PC-9 (cell line): ENCODE measurements at regions of chr2 and their contacts with region 1.

Region 1: GRCh38 chr2:219530048-219530963 is 13.3 kb downstream of the CHPF start:
- DNase-seq: peak; percentile 54 to 84
- H3K4me3 ChIP-seq: no peak overlapping the region
- H3K27ac ChIP-seq: no peak overlapping the region
- H3K4me1 ChIP-seq: no peaks in the 10 kb centered on the region
- H3K27me3 ChIP-seq: peaks cover 33% of the 10 kb centered on the region
- CTCF ChIP-seq: peak; percentile 95

Region 2: GRCh38 chr2:219057709-219058540 is 472.4 kb before region 1 on chr2:
- CTCF ChIA-PET with region 1: no interaction called
- POLR2A ChIA-PET with region 1: no interaction called
- intact Hi-C with region 1: loop called (anchors 2 kb)
- DNase-seq: peak in 1 of 2 experiments; percentile 69
- H3K4me3 ChIP-seq: no peak overlapping the region
- H3K27ac ChIP-seq: no peak overlapping the region
- H3K4me1 ChIP-seq: no peaks in the 10 kb centered on the region
- H3K27me3 ChIP-seq: peaks cover 70% of the 10 kb centered on the region
- CTCF ChIP-seq: peak; percentile 80

Region 3: DNA sequence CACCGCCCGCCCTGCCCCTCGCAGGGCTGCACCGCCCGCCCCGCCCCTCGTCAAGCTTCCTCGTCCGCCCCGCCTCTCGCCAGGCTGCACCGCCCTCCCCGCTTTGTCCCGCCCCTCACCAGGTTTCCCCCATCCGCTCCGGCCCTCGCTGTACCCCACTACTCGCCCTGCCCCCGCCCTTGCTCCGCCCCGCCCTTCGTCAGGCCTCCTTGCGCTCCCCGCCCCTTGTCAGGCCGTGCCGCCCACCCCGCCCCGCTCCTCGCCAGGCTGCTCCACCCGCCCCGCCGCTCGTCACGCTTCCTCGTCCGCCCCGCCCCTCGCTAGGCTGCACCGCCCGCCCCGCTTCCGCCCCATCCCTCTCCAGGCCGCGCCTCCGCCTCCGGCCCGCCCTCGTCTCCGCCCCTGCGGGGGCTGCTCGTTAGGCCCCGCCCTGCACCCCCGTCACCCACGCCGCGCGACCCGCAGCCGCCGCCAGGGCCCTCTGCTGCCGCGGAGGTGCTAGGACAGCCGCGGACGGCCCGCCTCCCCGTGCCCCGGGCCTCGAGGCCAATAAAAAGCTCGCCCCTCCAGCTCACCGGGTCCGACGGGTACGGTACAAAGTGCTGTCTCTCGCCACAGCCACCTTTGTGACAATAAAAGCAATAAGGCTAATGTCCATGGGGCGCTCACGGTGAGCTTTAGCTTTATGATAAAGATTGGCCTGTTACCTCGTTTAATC is 142.0 kb before region 1 on chr2:
- CTCF ChIA-PET with region 1: interaction called, 7 read pairs
- POLR2A ChIA-PET with region 1: interaction called, 10 read pairs
- intact Hi-C with region 1: loop called (anchors 1 kb)
- DNase-seq: peak; percentile 71 to 98
- H3K4me3 ChIP-seq: peak overlapping the region; percentile 53
- H3K27ac ChIP-seq: peak overlapping the region; percentile 30
- H3K4me1 ChIP-seq: peaks cover 6% of the 10 kb centered on the region; the same call in 1 of the 2 replicates
- H3K27me3 ChIP-seq: no peaks in the 10 kb centered on the region
- CTCF ChIP-seq: peak; percentile 60

Region 4: DNA sequence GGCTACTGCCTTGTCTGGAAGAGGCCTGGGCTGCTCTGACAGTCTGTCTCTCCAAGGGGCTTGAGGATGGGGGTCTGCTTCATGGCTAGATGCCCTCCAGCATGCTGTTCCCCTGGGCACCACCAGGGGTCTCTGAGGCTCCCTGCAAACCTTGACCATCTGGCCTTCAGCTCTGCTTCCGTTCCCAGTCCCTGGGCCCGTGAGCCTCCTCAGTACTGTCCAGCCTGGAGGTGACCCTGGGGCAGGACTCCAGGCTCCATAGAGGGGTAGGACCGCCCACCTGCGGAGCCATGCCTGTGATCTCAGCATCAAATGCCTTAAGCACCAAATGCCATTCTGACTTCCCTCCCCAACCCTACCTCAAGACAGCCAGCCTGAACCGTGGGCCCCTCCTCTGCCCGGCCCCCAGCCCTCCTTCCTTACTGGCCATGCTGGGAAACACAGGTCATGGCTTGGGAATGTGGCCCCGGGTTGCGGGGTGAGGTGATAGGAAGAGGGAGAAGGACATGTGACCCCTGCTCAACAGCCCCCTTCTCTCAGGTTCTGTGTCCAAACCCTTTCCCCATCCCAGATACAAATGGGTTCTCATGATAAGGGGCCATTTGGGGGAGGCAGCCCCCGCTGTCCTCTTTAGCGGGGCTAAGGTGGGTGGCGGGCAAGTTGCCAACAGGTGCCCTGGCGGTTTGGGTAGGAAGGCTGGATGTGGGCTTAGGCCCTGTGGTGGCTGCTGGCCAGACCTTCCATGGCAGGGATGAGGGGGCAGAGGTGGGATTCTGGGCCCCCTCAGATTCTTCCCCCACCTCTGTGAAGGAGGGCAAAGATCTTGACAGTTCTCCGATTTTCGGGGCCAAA is 70.6 kb before region 1 on chr2:
- CTCF ChIA-PET with region 1: interaction called, 13 read pairs
- POLR2A ChIA-PET with region 1: no interaction called
- intact Hi-C with region 1: no loop called
- DNase-seq: peak in 1 of 2 experiments; percentile 50
- H3K4me3 ChIP-seq: no peak overlapping the region
- H3K27ac ChIP-seq: no peak overlapping the region
- H3K4me1 ChIP-seq: peaks cover 27% of the 10 kb centered on the region
- H3K27me3 ChIP-seq: no peaks in the 10 kb centered on the region
- CTCF ChIP-seq: peak; percentile 91

Region 5: DNA sequence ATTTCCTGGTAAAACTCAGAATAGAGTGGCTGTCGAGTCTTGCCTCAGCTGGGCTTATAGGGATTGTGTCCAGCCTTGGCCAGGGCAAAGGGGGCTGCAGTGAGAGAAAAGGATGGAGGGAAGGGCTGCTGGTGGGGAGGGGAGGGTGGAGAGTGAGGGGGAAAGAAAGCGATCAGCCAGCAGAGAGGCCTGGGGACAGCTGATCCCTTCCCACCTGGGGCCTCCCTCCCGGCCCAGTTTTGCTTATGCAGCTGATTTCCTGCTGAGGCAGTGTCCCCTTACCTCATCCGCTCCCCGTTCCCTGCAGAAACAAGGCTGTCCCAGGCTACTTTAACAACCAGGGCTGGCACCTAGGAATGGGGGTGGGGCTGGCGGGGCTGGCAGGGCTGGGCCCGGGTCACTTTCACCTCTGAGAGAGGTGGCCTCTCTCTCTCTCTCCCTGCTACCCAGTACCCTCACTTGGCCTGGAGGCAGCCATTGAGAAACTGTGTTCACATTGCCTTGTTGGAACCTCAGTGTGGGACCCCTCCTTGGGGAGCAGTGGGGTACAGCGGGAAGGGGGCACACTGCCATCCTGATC is 43.8 kb before region 1 on chr2:
- CTCF ChIA-PET with region 1: interaction called, 19 read pairs
- POLR2A ChIA-PET with region 1: no interaction called
- intact Hi-C with region 1: no loop called
- DNase-seq: no peak
- H3K4me3 ChIP-seq: no peak overlapping the region
- H3K27ac ChIP-seq: no peak overlapping the region
- H3K4me1 ChIP-seq: no peaks in the 10 kb centered on the region
- H3K27me3 ChIP-seq: no peaks in the 10 kb centered on the region
- CTCF ChIP-seq: no peak